ENCODE measurements at regions of chr13 and their contacts with region 1.

Region 1: DNA sequence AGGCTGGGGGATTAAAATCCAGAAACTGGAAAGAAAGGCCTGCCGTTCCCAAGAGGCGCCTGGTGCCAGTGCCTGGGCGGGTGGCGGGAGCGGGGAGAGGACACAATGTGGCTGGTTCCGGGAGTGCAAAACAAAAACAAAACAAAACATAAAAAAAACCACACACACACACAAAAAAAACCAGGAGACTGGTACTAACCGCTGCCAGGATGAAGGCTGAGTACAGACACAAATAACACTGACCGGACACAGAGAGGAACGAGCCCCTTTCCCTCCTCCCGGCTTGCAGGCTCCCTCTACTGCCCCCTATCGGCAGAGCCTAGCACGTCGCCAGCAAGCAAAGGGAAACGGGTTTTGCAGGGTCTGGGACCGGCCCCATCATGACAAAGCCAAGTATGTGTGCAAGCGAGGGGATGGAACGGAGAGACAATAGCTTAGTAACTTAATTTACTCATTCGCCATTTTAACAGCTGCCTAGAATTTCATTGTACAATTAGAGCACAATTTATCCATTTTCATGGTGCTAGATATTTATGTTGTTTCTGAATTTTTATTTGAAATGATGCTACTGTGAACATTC is 17.9 kb upstream of the ZDHHC20 start:
- DNase-seq: peak; percentile 84
- H3K4me3 Mint-ChIP-seq: peak overlapping the region; percentile 67
- H3K27ac Mint-ChIP-seq: peak overlapping the region; percentile 65
- H3K4me1 Mint-ChIP-seq: peaks cover 17% of the 10 kb centered on the region
- H3K27me3 Mint-ChIP-seq: peaks cover 3% of the 10 kb centered on the region

Region 2: DNA sequence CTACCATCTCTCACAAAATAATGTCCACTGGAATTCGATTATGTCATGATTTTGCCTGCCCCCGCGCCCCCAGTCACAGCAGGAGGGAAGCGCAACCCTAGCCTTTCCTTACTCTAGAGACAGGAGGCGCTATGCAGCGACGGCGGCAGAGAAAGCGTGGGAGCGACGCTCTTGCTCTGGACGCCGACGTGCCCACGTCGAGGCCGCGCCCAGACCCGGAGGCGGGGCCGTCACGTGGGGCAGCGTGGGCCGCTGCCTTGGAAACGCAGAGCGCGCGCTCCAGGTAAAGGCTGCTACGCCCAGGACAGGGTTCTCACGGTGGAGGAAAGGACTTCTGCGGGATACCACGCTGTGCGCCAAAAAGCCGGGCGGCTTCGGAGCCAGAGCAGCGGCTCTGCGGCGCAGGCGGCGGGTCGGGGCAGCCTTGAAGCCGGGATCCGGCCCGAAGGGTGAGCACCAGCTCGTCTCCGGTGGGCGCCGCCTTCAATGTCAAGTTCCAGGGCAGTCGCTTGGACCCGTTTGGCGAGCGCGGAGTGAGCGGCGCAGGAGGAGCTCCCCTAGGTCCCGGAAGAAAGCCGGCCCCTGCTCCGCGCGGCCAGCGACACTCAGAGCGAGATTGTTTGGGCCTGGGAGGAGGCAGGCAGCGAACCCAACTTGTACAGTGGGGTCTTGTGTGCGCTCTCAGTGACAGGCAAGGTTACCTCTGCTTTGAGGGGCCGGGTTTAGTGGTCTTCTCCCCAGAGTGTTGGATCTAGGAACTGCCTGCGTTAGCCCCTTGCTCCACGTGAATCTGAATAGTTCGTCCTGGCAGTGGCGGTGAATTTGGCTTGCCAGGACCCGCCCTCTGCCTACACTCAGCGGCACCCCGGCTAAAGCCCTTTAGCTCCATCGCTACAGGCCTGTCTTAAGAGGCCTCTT is 178.8 kb before region 1 on chr13:
- CTCF ChIA-PET with region 1: interaction called, 24 read pairs
- POLR2A ChIA-PET with region 1: no interaction called
- DNase-seq: peak; percentile 87
- H3K4me3 Mint-ChIP-seq: peak overlapping the region; percentile 82
- H3K27ac Mint-ChIP-seq: peak overlapping the region; percentile 62
- H3K4me1 Mint-ChIP-seq: peaks cover 26% of the 10 kb centered on the region
- H3K27me3 Mint-ChIP-seq: no peaks in the 10 kb centered on the region

Region 3: GRCh38 chr13:21450936-21451335 is 26.0 kb before region 1 on chr13:
- CTCF ChIA-PET with region 1: no interaction called
- POLR2A ChIA-PET with region 1: no interaction called
- DNase-seq: no peak
- H3K4me3 Mint-ChIP-seq: no peak overlapping the region
- H3K27ac Mint-ChIP-seq: no peak overlapping the region
- H3K4me1 Mint-ChIP-seq: peaks cover 29% of the 10 kb centered on the region
- H3K27me3 Mint-ChIP-seq: no peaks in the 10 kb centered on the region